ENCODE measurements at regions of chr3 and their contacts with region 1.

Region 1: GRCh38 chr3:120393243-120393642 is 44.1 kb upstream of the LRRC58 start:
- DNase-seq: peak; percentile 21
- ATAC-seq: peak; percentile 19; the same call in 1 of the 2 replicates
- H3K4me3 ChIP-seq: no peak overlapping the region
- H3K27ac ChIP-seq: no peak overlapping the region
- H3K4me1 ChIP-seq: no peaks in the 10 kb centered on the region
- H3K27me3 ChIP-seq: no peaks in the 10 kb centered on the region
- CTCF ChIP-seq: no peak
- POLR2A ChIP-seq: no peak
- RAD21 ChIP-seq: no peak

Region 2: DNA sequence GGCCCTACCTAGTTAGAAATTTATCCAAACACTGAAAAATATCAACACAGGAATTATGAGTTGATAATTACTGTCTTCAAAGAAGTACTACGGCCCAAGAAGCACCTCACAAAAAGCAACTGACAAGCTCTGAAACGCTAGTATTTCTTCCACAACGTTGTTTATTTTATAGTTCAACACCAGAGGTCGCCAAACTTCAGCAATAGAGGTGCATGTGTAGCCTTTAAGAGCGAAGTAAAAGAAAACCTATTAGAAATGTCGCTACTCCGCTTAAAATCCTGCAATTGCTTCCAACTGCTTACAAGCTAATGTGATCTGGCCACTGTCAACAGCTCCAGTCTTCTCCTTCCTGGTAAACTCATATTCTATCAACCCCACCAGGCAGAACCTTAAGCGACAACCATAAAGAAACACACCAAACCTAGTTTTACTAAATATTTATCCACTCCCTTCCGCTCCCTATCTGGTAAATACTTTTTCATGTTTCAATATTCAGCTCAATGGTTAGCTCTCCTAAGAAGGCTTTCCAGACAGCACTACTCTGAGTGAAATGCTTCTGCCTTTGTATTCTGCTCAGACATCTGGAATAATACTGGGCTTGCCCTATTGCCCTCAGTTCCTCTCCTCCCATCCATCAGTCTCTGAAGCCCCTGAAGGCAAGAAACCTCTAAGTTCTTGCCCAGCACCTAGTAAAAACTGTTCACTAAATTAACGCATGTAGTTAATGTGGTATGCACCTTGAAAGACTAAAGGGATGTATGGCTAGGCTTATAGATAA is 501.1 kb before region 1 on chr3:
- CTCF ChIA-PET with region 1: no interaction called
- POLR2A ChIA-PET with region 1: no interaction called
- dilution Hi-C with region 1: no loop called
- in situ Hi-C with region 1: no loop called
- intact Hi-C with region 1: loop called (anchors 1 kb)
- DNase-seq: peak; percentile 71
- ATAC-seq: peak; percentile 70; the same call in 1 of the 2 replicates
- H3K4me3 ChIP-seq: no peak overlapping the region
- H3K27ac ChIP-seq: no peak overlapping the region
- H3K4me1 ChIP-seq: no peaks in the 10 kb centered on the region
- H3K27me3 ChIP-seq: no peaks in the 10 kb centered on the region
- CTCF ChIP-seq: peak; percentile 77
- POLR2A ChIP-seq: no peak
- RAD21 ChIP-seq: peak; percentile 89

Region 3: GRCh38 chr3:120052225-120052624 is 341.0 kb before region 1 on chr3:
- CTCF ChIA-PET with region 1: no interaction called
- POLR2A ChIA-PET with region 1: no interaction called
- dilution Hi-C with region 1: no loop called
- in situ Hi-C with region 1: no loop called
- intact Hi-C with region 1: no loop called
- DNase-seq: no peak
- ATAC-seq: no peak
- H3K4me3 ChIP-seq: no peak overlapping the region
- H3K27ac ChIP-seq: no peak overlapping the region
- H3K4me1 ChIP-seq: peaks cover 2% of the 10 kb centered on the region; the same call in 1 of the 2 replicates
- H3K27me3 ChIP-seq: no peaks in the 10 kb centered on the region
- CTCF ChIP-seq: no peak
- POLR2A ChIP-seq: no peak
- RAD21 ChIP-seq: no peak

Region 4: GRCh38 chr3:120245386-120245785 is 147.9 kb before region 1 on chr3:
- CTCF ChIA-PET with region 1: no interaction called
- POLR2A ChIA-PET with region 1: no interaction called
- dilution Hi-C with region 1: no loop called
- in situ Hi-C with region 1: no loop called
- intact Hi-C with region 1: loop called (anchors 2 kb)
- DNase-seq: no peak
- ATAC-seq: no peak
- H3K4me3 ChIP-seq: no peak overlapping the region
- H3K27ac ChIP-seq: no peak overlapping the region
- H3K4me1 ChIP-seq: no peaks in the 10 kb centered on the region; the same call in 1 of the 2 replicates
- H3K27me3 ChIP-seq: peaks cover 12% of the 10 kb centered on the region
- CTCF ChIP-seq: no peak
- POLR2A ChIP-seq: no peak
- RAD21 ChIP-seq: no peak

Region 5: DNA sequence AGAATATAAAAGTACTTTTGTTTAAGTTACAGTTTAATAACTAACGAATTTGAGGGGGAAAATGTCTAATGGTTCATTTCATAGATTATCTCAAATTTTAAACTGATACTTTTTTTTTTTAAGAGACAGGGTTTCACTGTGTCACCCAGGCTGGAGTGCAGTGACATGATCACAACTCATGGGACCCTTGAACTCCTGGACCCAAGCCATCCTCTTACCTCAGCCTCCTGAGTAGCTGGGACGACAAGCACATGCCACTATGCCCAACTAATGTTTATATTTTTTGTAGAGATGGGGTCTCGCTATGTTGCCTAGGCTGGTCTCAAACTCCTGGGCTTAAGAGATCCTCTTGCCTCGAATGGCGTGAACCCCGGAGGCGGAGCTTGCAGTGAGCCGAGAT is 60.6 kb before region 1 on chr3:
- CTCF ChIA-PET with region 1: no interaction called
- POLR2A ChIA-PET with region 1: interaction called, 10 read pairs
- dilution Hi-C with region 1: no loop called
- in situ Hi-C with region 1: no loop called
- intact Hi-C with region 1: no loop called
- DNase-seq: no peak
- ATAC-seq: no peak
- H3K4me3 ChIP-seq: no peak overlapping the region
- H3K27ac ChIP-seq: no peak overlapping the region
- H3K4me1 ChIP-seq: 0 out of 2 replicates have a peak, but pooled peaks cover 2% of the 10 kb centered on the region
- H3K27me3 ChIP-seq: no peaks in the 10 kb centered on the region
- CTCF ChIP-seq: no peak
- POLR2A ChIP-seq: no peak
- RAD21 ChIP-seq: no peak